Heart left ventricle (tissue), 16 donors: ENCODE measurements at regions of chr1 and their contacts with region 1.

Region 1: GRCh38 chr1:59707178-59707791 is 107.5 kb upstream of the HOOK1 start:
- DNase-seq: peak in 4 of 5 donors; percentile 34 to 76 (median 62)
- ATAC-seq: peak; percentile 53 to 92 (median 86)
- H3K4me3 ChIP-seq: no peak overlapping the region
- H3K27ac ChIP-seq: peak overlapping the region in 11 of 12 donors; percentile 17 to 72 (median 53)
- H3K4me1 ChIP-seq: peaks cover 0 to 60% (median 36%) of the 10 kb centered on the region in 12 donors
- H3K27me3 ChIP-seq: no peaks in the 10 kb centered on the region
- CTCF ChIP-seq: no peak
- POLR2A ChIP-seq: no peak

Region 2: GRCh38 chr1:58739856-58740466 is 967.3 kb before region 1 on chr1:
- intact Hi-C with region 1: loop called in 1 of 10 experiments (anchors 5 kb)
- DNase-seq: peak in 1 of 5 donors; percentile 20
- ATAC-seq: peak in 1 of 4 donors; percentile 43
- H3K4me3 ChIP-seq: no peak overlapping the region
- H3K27ac ChIP-seq: no peak overlapping the region
- H3K4me1 ChIP-seq: peaks cover 0 to 21% (median 0%) of the 10 kb centered on the region in 12 donors
- H3K27me3 ChIP-seq: no peaks in the 10 kb centered on the region
- CTCF ChIP-seq: peak; percentile 72 to 92 (median 88)
- POLR2A ChIP-seq: no peak

Region 3: GRCh38 chr1:58768971-58769808 is 938.1 kb before region 1 on chr1:
- intact Hi-C with region 1: loop called in 1 of 10 experiments (anchors 10 kb)
- DNase-seq: peak; percentile 72 to 86 (median 74)
- ATAC-seq: peak in 2 of 4 donors; percentile 10 to 51
- H3K4me3 ChIP-seq: no peak overlapping the region
- H3K27ac ChIP-seq: no peak overlapping the region
- H3K4me1 ChIP-seq: peaks cover 3 to 26% (median 18%) of the 10 kb centered on the region in 12 donors
- H3K27me3 ChIP-seq: no peaks in the 10 kb centered on the region
- CTCF ChIP-seq: peak; percentile 75 to 92 (median 86)
- POLR2A ChIP-seq: no peak

Region 4: GRCh38 chr1:59156526-59157199 is 550.6 kb before region 1 on chr1:
- intact Hi-C with region 1: loop called in 1 of 10 experiments (anchors 5 kb)
- DNase-seq: no peak
- ATAC-seq: peak in 1 of 4 donors; percentile 52
- H3K4me3 ChIP-seq: peak overlapping the region in 4 of 12 donors; percentile 2 to 18 (median 10)
- H3K27ac ChIP-seq: peak overlapping the region in 2 of 12 donors; percentile 17 to 39
- H3K4me1 ChIP-seq: peaks cover 0 to 27% (median 17%) of the 10 kb centered on the region in 12 donors
- H3K27me3 ChIP-seq: no peaks in the 10 kb centered on the region
- CTCF ChIP-seq: no peak
- POLR2A ChIP-seq: no peak

Region 5: DNA sequence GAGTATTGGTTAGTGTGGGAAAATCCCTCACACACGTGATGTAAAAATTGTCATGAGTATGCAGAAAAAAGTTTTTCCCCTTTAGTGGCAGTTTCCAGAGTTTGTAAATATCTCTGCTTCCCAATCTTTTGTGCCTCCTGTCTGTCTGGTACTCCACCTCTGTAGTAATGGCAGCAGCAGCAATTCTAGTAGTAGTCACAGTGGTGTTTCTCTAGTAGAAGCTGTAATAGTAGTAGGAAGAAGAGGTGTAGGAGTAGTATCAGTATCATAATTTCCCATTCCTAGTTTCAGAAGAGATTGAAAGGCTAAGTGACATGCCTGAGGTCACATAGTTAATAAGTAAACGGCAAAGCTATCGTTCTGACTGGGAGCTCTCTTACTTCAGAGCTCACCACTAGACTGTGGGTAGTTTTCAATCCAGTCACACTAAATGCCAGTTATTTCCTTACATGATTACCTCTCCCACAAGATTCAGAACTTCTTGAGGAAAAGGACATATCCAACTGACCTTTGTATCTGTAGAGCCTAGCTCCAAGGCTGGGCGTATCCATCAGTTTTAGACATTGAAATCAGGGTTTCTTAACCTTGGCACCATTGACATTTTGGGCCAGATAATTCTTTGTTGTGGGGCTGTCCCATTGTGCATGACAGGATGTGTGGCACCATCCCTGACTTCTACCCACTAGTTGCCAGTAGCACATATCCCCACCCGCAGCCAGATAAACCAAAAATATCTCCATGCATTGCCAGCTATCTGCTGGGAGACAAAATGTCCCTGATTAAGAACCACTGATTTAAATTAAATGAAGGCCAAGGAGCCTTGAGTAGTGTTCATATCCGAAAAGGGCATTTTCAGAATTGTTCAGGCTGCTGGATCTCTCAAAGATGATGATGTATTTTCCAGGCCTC is 274.5 kb before region 1 on chr1:
- intact Hi-C with region 1: no loop called
- DNase-seq: no peak
- ATAC-seq: peak in 1 of 4 donors; percentile 17
- H3K4me3 ChIP-seq: no peak overlapping the region
- H3K27ac ChIP-seq: peak overlapping the region in 2 of 12 donors; percentile 3 to 46
- H3K4me1 ChIP-seq: peaks cover 0 to 28% (median 12%) of the 10 kb centered on the region in 12 donors
- H3K27me3 ChIP-seq: no peaks in the 10 kb centered on the region
- CTCF ChIP-seq: no peak
- POLR2A ChIP-seq: no peak